Astrocyte of the spinal cord (primary cell): ENCODE measurements at regions of chr9 and their contacts with region 1.

Region 1: GRCh38 chr9:83937911-83938323 is 16.7 kb upstream of the KIF27 start:
- DNase-seq: peak; percentile 67
- H3K4me3 ChIP-seq: no peak overlapping the region
- CTCF ChIP-seq: peak; percentile 49

Region 2: GRCh38 chr9:84261082-84261746 is 323.3 kb after region 1 on chr9:
- in situ Hi-C with region 1: loop called (anchors 25 kb)
- DNase-seq: peak; percentile 78
- H3K4me3 ChIP-seq: peak overlapping the region; percentile 8
- CTCF ChIP-seq: peak; percentile 94